Mammary epithelial cell (primary cell): ENCODE measurements at regions of chr11 and their contacts with region 1.

Region 1: GRCh38 chr11:78883506-78883905 is 308.8 kb upstream of the NARS2 start:
- DNase-seq: no peak
- H3K4me3 ChIP-seq: no peak overlapping the region
- H3K27ac ChIP-seq: no peak overlapping the region
- H3K4me1 ChIP-seq: peaks cover 13% of the 10 kb centered on the region
- H3K27me3 ChIP-seq: no peaks in the 10 kb centered on the region
- CTCF ChIP-seq: no peak

Region 2: GRCh38 chr11:78268591-78269410 is 614.7 kb before region 1 on chr11:
- CTCF ChIA-PET with region 1: no interaction called
- dilution Hi-C with region 1: no loop called
- in situ Hi-C with region 1: no loop called
- intact Hi-C with region 1: no loop called
- DNase-seq: no peak
- H3K4me3 ChIP-seq: no peak overlapping the region
- H3K27ac ChIP-seq: no peak overlapping the region
- H3K4me1 ChIP-seq: no peaks in the 10 kb centered on the region
- H3K27me3 ChIP-seq: no peaks in the 10 kb centered on the region
- CTCF ChIP-seq: no peak

Region 3: DNA sequence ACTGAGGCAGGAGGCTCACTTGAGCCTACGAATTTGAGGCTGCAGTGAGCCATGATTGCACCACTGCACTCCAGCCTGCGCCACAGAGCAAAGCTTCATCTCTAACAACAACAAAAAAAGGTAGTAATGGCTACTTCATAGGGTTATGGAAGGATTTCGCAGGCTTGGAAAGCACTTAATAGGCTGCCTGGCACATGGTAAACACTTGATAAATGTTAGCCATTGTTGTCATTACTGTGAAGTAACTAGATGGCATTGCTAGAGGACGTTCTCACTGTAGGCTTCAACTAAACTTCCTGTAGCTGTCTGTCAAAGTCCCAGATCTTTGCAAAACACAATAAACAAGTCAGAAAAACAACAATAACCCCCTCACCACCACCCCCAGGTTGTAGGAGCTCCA is 48.4 kb after region 1 on chr11:
- CTCF ChIA-PET with region 1: no interaction called
- dilution Hi-C with region 1: loop called (anchors 5 kb)
- in situ Hi-C with region 1: no loop called
- intact Hi-C with region 1: no loop called
- DNase-seq: no peak
- H3K4me3 ChIP-seq: no peak overlapping the region
- H3K27ac ChIP-seq: no peak overlapping the region
- H3K4me1 ChIP-seq: no peaks in the 10 kb centered on the region
- H3K27me3 ChIP-seq: no peaks in the 10 kb centered on the region
- CTCF ChIP-seq: no peak

Region 4: DNA sequence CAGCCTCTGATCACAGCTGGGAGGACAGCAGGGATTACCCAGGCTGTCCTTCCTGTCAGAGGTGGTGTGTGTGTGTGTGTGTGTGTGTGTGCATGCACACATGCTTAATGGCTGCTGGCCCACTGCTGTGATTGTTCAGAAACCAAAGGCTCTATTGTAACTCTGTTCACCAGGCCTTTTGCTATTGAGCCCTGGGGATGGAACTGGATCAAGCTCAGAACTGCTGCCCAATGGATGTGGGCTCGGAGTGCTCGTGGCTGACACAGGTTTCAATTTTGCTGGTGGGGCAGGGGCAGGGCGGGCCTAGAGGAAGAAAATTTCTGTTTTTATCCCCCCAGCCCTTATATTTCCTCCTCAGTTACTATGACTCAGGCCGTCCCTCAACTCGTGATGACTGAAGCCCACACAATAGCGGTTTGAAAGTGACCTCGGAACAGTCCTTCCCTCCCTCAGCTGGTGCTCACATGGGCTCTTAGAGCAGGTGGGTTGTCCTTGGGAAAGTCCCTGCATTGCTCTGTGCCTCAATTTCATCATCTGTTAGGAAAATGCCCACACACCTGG is 198.0 kb after region 1 on chr11:
- CTCF ChIA-PET with region 1: no interaction called
- dilution Hi-C with region 1: no loop called
- in situ Hi-C with region 1: no loop called
- intact Hi-C with region 1: no loop called
- DNase-seq: no peak
- H3K4me3 ChIP-seq: no peak overlapping the region
- H3K27ac ChIP-seq: no peak overlapping the region
- H3K4me1 ChIP-seq: no peaks in the 10 kb centered on the region
- H3K27me3 ChIP-seq: no peaks in the 10 kb centered on the region
- CTCF ChIP-seq: no peak